ENCODE measurements at regions of chr3 and their contacts with region 1.

Region 1: GRCh38 chr3:149224736-149225594 is 3.3 kb upstream of the CP start:
- DNase-seq: peak; percentile 46
- H3K4me3 Mint-ChIP-seq: peak overlapping the region; percentile 62
- H3K27ac Mint-ChIP-seq: peak overlapping the region; percentile 17
- H3K4me1 Mint-ChIP-seq: peaks cover 21% of the 10 kb centered on the region
- H3K27me3 Mint-ChIP-seq: no peaks in the 10 kb centered on the region

Region 2: DNA sequence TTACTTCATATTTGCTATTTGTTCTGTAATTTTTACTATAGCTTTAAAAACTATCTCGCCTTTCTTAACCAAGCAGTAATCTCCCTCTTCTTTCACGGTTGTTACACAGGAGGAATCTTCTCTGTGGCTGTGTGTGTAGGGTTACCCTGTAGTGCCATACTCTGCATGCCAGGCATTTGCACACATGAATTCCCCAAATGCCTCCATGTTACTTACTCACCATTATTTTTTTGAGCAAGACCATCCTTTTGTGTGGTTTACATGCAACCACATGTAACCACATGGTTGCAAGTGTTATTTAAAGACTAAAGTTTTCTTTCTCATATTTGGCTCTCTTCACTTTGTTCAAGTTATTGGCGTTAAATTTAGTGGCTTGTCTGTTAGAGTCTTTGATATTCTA is 50.1 kb before region 1 on chr3:
- CTCF ChIA-PET with region 1: interaction called, 4 read pairs
- intact Hi-C with region 1: loop called (anchors 5 kb)
- DNase-seq: peak; percentile 27
- H3K4me3 Mint-ChIP-seq: no peak overlapping the region
- H3K27ac Mint-ChIP-seq: no peak overlapping the region
- H3K4me1 Mint-ChIP-seq: peaks cover 5% of the 10 kb centered on the region
- H3K27me3 Mint-ChIP-seq: no peaks in the 10 kb centered on the region

Region 3: GRCh38 chr3:149203758-149204157 is 21.2 kb before region 1 on chr3:
- CTCF ChIA-PET with region 1: no interaction called
- intact Hi-C with region 1: loop called (anchors 1 kb)
- DNase-seq: no peak
- H3K4me3 Mint-ChIP-seq: no peak overlapping the region
- H3K27ac Mint-ChIP-seq: no peak overlapping the region
- H3K4me1 Mint-ChIP-seq: peaks cover 7% of the 10 kb centered on the region
- H3K27me3 Mint-ChIP-seq: peaks cover 9% of the 10 kb centered on the region